Transverse colon (tissue), 4 donors: ENCODE measurements at regions of chr20 and their contacts with region 1.

Region 1: DNA sequence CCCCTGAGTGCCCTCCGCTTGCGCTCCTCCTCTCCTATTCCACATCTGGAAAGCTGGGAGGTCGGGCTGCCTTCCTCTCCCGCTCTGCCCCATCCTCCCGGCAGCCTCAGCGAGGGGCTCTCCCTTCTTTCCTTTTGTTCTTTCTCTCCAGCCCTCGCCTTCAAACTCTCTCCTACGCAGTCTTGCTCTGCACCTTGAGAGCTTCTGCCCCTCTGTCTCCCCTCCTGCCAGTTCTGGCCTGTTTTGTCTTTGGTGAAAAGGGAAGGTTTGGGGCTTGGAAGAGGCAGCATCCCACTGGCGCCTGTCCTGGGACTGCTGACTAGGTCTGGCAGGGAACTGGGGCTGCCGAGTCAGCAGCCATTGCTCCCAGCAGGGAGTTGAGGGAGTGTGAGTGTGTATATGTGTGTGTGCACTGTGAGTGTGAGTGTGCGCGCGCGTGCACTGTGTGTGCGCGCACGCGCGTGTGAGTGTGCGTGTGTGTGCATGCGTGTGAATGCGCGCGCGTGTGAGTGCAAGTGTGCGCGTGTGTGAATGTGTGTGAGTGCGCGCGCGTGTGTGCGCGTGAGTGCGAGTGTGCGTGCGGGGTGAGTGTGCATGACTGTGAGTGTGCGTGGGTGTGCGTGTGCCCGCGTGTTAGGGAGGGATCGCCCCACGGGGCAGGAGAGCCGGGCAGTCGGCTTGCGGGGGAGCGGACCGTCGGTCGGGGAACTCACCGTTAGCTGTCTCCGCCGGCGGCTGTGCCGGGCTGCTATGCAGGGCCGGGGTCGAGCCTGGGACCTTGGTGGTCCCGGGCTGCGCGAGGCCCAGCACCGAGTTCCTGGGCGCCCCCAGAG is 523 bp downstream of the CPXM1 start:
- DNase-seq: no peak
- H3K4me3 ChIP-seq: peak overlapping the region in 2 of 4 donors; percentile 21 to 38
- H3K27ac ChIP-seq: no peak overlapping the region
- H3K4me1 ChIP-seq: peaks cover 0 to 20% (median 16%) of the 10 kb centered on the region in 4 donors
- H3K27me3 ChIP-seq: peaks cover 75% of the 10 kb centered on the region
- CTCF ChIP-seq: no peak
- EP300 ChIP-seq: no peak
- POLR2A ChIP-seq: no peak

Region 2: DNA sequence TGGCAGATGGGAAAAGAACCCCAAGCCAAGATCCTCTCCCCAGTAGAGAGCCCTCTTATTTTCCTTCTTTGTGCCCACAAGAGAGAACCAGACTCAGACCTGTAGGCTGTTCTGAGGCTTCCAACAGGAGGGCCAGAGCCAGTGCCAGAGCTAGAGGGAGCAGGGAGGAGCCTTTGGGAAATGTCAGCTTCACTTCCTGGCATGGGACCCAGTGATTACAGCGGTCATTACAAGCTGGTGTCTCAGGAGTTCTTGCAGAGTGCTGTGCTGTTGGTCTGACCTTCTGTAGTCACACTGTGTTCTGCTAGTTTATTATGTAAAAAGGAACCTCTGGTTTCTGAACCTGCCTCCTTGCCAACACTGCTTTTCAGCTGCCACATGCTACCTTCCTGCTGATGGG is 659.3 kb before region 1 on chr20:
- in situ Hi-C with region 1: no loop called
- intact Hi-C with region 1: loop called (anchors 10 kb)
- DNase-seq: peak; percentile 35
- H3K4me3 ChIP-seq: no peak overlapping the region
- H3K27ac ChIP-seq: peak overlapping the region in 1 of 4 donors; percentile 25
- H3K4me1 ChIP-seq: peaks cover 0 to 22% (median 5%) of the 10 kb centered on the region in 4 donors
- H3K27me3 ChIP-seq: no peaks in the 10 kb centered on the region
- CTCF ChIP-seq: no peak
- EP300 ChIP-seq: no peak
- POLR2A ChIP-seq: no peak

Region 3: DNA sequence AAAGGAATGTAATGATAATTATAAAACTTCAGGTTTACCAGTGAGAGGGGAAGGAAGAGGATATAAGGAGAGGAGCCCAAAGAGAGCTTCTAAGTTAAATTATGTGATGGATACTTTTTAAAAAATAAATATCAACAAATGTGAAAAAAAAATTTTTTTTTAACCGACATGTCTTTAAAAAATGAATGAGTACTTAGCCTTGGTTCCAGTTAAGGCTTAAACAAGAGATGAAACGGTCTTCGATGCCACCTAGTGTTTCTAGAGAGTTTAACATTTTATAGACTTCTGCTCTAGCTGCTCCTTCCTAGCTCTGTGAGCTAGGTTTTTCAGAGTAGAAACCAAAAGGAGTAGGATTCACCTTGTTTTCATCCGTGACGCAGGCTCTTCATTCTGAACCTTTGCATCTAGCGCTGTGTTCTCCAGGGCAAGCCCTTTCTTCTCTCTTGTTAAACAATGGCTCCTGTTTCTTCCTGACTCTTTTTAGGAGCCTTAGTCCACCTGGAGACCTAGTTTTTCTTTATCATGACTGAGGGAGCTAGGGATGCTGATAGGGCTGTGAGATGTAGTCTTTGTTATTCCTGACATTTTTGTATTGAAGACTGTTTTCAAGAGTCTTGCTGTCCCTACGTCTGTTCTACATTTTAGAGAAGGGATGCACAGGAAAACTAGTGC is 201.1 kb after region 1 on chr20:
- in situ Hi-C with region 1: no loop called
- intact Hi-C with region 1: loop called (anchors 5 kb)
- DNase-seq: no peak
- H3K4me3 ChIP-seq: no peak overlapping the region
- H3K27ac ChIP-seq: no peak overlapping the region
- H3K4me1 ChIP-seq: no peaks in the 10 kb centered on the region
- H3K27me3 ChIP-seq: no peaks in the 10 kb centered on the region
- CTCF ChIP-seq: peak in 4 of 5 experiments; percentile 29 to 47 (median 34)
- EP300 ChIP-seq: no peak
- POLR2A ChIP-seq: no peak